ENCODE measurements at regions of chr14 and their contacts with region 1.

Region 1: GRCh38 chr14:55026793-55027561 is at the starts of genes SOCS4 and WDHD1:
- DNase-seq: peak; percentile 93 to 100 (median 96)
- ATAC-seq: peak; percentile 97
- H3K4me3 ChIP-seq: peak within 1 kb of the TSS; percentile 87
- H3K4me3 Mint-ChIP-seq: peak within 1 kb of the TSS; percentile 84 to 96 (median 93)
- H3K27ac ChIP-seq: peak within 1 kb of the TSS; percentile 86
- H3K27ac Mint-ChIP-seq: peak within 1 kb of the TSS; percentile 68 to 96 (median 92)
- H3K4me1 ChIP-seq: peaks cover 12 to 31% of the 10 kb centered on the region in 2 donors
- H3K4me1 Mint-ChIP-seq: peaks cover 26 to 59% (median 53%) of the 10 kb centered on the region in 7 donors
- H3K27me3 ChIP-seq: no peaks in the 10 kb centered on the region
- H3K27me3 Mint-ChIP-seq: no peaks in the 10 kb centered on the region
- total RNA-seq, gene SOCS4: 21.2 to 30.3 (median 22.1) TPM
- total RNA-seq, gene WDHD1: 2.6 to 26.6 (median 3.6) TPM

Region 2: DNA sequence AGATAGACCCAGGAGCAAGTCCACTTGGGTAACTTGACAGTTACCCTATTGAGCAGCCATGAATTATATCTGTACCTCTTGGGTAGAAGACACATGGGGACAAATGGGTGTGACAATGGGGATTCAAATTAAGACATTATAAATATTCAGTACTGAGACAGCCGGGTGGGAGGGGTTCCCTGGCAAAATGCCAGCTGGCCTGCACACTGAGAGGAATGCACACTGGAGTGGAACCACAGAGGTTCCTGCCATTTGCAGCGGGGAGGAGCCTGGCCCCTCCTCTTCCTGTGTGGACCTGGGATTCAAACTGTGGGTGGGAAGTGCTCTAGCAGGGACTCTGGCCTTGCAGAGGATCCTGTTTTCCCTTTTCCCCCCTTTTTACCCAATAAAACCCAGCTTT is 748.9 kb before region 1 on chr14:
- CTCF ChIA-PET with region 1: no interaction called
- POLR2A ChIA-PET with region 1: no interaction called
- intact Hi-C with region 1: no loop called
- DNase-seq: no peak
- ATAC-seq: no peak
- H3K4me3 ChIP-seq: no peak overlapping the region
- H3K4me3 Mint-ChIP-seq: no peak overlapping the region
- H3K27ac ChIP-seq: no peak overlapping the region
- H3K27ac Mint-ChIP-seq: no peak overlapping the region
- H3K4me1 ChIP-seq: no peaks in the 10 kb centered on the region
- H3K4me1 Mint-ChIP-seq: no peaks in the 10 kb centered on the region
- H3K27me3 ChIP-seq: no peaks in the 10 kb centered on the region
- H3K27me3 Mint-ChIP-seq: peaks cover 2 to 25% (median 14%) of the 10 kb centered on the region in 5 donors

Region 3: GRCh38 chr14:54440873-54441868 is 585.8 kb before region 1 on chr14 and contains the start of gene CNIH1:
- CTCF ChIA-PET with region 1: no interaction called
- POLR2A ChIA-PET with region 1: no interaction called
- intact Hi-C with region 1: loop called (anchors 1 to 2 kb)
- DNase-seq: peak; percentile 85 to 99 (median 93)
- ATAC-seq: peak; percentile 97
- H3K4me3 ChIP-seq: peak within 1 kb of the TSS; percentile 73
- H3K4me3 Mint-ChIP-seq: peak within 1 kb of the TSS; percentile 85 to 97 (median 94)
- H3K27ac ChIP-seq: peak within 1 kb of the TSS; percentile 80
- H3K27ac Mint-ChIP-seq: peak within 1 kb of the TSS; percentile 87 to 98 (median 95)
- H3K4me1 ChIP-seq: peaks cover 9 to 23% of the 10 kb centered on the region in 2 donors
- H3K4me1 Mint-ChIP-seq: peaks cover 23 to 54% (median 49%) of the 10 kb centered on the region in 7 donors
- H3K27me3 ChIP-seq: no peaks in the 10 kb centered on the region
- H3K27me3 Mint-ChIP-seq: peaks cover 0 to 2% (median 0%) of the 10 kb centered on the region in 5 donors
- total RNA-seq, gene CNIH1: 50.5 to 87.9 (median 57.8) TPM

Region 4: DNA sequence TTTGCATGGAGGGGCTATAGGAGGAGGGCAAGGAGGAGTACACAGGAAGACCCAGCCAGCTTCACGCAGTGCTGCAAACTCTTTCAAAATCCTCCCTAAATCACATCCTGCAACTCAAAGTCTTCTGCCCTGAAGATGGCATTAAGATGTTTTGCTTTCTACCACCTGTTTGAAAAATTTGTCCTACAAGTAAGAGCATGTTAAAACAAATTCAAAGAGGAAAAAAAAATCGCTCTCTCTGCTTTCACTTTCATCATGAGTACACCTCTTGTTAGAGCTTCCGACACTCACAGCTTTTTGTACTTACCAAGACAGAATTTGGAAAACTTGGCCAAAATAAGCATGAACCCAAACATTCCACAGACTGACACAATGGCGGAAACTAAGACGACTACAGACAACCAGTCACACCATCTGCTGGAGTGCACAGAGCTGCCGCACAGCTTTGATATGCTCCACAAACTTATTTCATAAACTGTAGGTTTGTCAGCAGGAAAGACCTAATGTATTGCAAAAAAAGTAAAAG is 145.7 kb before region 1 on chr14:
- CTCF ChIA-PET with region 1: interaction called, 3 read pairs
- POLR2A ChIA-PET with region 1: no interaction called
- intact Hi-C with region 1: loop called in 1 of 2 experiments (anchors 1 kb)
- DNase-seq: peak in 7 of 9 donors; percentile 55 to 74 (median 72)
- ATAC-seq: peak; percentile 77
- H3K4me3 ChIP-seq: peak overlapping the region; percentile 70
- H3K4me3 Mint-ChIP-seq: peak overlapping the region; percentile 85 to 97 (median 90)
- H3K27ac ChIP-seq: peak overlapping the region; percentile 79
- H3K27ac Mint-ChIP-seq: peak overlapping the region; percentile 90 to 99 (median 96)
- H3K4me1 ChIP-seq: peaks cover 7 to 17% of the 10 kb centered on the region in 2 donors
- H3K4me1 Mint-ChIP-seq: peaks cover 28 to 66% (median 60%) of the 10 kb centered on the region in 7 donors
- H3K27me3 ChIP-seq: no peaks in the 10 kb centered on the region
- H3K27me3 Mint-ChIP-seq: no peaks in the 10 kb centered on the region

Region 5: GRCh38 chr14:55038708-55039107 is 11.7 kb after region 1 on chr14:
- CTCF ChIA-PET with region 1: interaction called, 3 read pairs
- POLR2A ChIA-PET with region 1: no interaction called
- intact Hi-C with region 1: loop called in 1 of 2 experiments (anchors 1 kb)
- DNase-seq: no peak
- ATAC-seq: no peak
- H3K4me3 ChIP-seq: no peak overlapping the region
- H3K4me3 Mint-ChIP-seq: no peak overlapping the region
- H3K27ac ChIP-seq: no peak overlapping the region
- H3K27ac Mint-ChIP-seq: peak overlapping the region in 1 of 9 donors; percentile 15
- H3K4me1 ChIP-seq: no peaks in the 10 kb centered on the region
- H3K4me1 Mint-ChIP-seq: peaks cover 0 to 6% (median 2%) of the 10 kb centered on the region in 7 donors
- H3K27me3 ChIP-seq: no peaks in the 10 kb centered on the region
- H3K27me3 Mint-ChIP-seq: no peaks in the 10 kb centered on the region

Region 6: GRCh38 chr14:55065411-55065810 is 38.4 kb after region 1 on chr14:
- CTCF ChIA-PET with region 1: no interaction called
- POLR2A ChIA-PET with region 1: no interaction called
- intact Hi-C with region 1: no loop called
- DNase-seq: no peak
- ATAC-seq: no peak
- H3K4me3 ChIP-seq: no peak overlapping the region
- H3K4me3 Mint-ChIP-seq: no peak overlapping the region
- H3K27ac ChIP-seq: no peak overlapping the region
- H3K27ac Mint-ChIP-seq: peak overlapping the region in 4 of 9 donors; percentile 9 to 36 (median 18)
- H3K4me1 ChIP-seq: peaks cover 0 to 3% of the 10 kb centered on the region in 2 donors
- H3K4me1 Mint-ChIP-seq: peaks cover 7 to 25% (median 19%) of the 10 kb centered on the region in 7 donors
- H3K27me3 ChIP-seq: no peaks in the 10 kb centered on the region
- H3K27me3 Mint-ChIP-seq: no peaks in the 10 kb centered on the region

Region 7: DNA sequence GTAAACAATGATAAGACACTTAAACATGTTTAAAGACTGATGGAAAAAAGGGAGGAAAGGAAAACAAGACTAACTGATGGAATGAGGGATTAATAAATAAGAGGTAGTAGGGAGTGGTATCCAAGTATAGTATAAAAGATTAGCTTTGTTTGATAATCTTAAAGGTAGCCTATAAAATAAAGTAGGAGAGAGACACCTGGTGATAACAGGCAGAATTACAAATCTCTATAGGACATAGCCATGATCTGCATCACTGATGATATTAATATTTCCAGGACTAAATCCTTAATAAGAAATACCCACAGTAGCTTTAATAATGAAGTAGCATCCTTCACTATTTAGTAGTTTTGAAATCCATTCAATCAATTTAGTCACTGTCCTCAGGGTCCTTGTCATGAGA is 134.0 kb after region 1 on chr14:
- CTCF ChIA-PET with region 1: no interaction called
- POLR2A ChIA-PET with region 1: no interaction called
- intact Hi-C with region 1: loop called in 1 of 2 experiments (anchors 1 kb)
- DNase-seq: peak in 5 of 9 donors; percentile 6 to 37 (median 16)
- ATAC-seq: peak; percentile 68
- H3K4me3 ChIP-seq: no peak overlapping the region
- H3K4me3 Mint-ChIP-seq: no peak overlapping the region
- H3K27ac ChIP-seq: no peak overlapping the region
- H3K27ac Mint-ChIP-seq: peak overlapping the region in 1 of 9 donors; percentile 60
- H3K4me1 ChIP-seq: no peaks in the 10 kb centered on the region
- H3K4me1 Mint-ChIP-seq: peaks cover 0 to 20% (median 9%) of the 10 kb centered on the region in 7 donors
- H3K27me3 ChIP-seq: no peaks in the 10 kb centered on the region
- H3K27me3 Mint-ChIP-seq: peaks cover 0 to 4% (median 0%) of the 10 kb centered on the region in 5 donors

Region 8: GRCh38 chr14:55270832-55271565 is 244.0 kb after region 1 on chr14 and contains the start of gene FBXO34:
- CTCF ChIA-PET with region 1: no interaction called
- POLR2A ChIA-PET with region 1: no interaction called
- intact Hi-C with region 1: no loop called
- DNase-seq: peak; percentile 96 to 100 (median 99)
- ATAC-seq: peak; percentile 96
- H3K4me3 ChIP-seq: peak within 1 kb of the TSS; percentile 64
- H3K4me3 Mint-ChIP-seq: peak within 1 kb of the TSS; percentile 85 to 94 (median 92)
- H3K27ac ChIP-seq: peak within 1 kb of the TSS; percentile 88
- H3K27ac Mint-ChIP-seq: peak within 1 kb of the TSS; percentile 85 to 96 (median 94)
- H3K4me1 ChIP-seq: peaks cover 4 to 19% of the 10 kb centered on the region in 2 donors
- H3K4me1 Mint-ChIP-seq: peaks cover 19 to 48% (median 40%) of the 10 kb centered on the region in 7 donors
- H3K27me3 ChIP-seq: no peaks in the 10 kb centered on the region
- H3K27me3 Mint-ChIP-seq: peaks cover 0 to 3% (median 0%) of the 10 kb centered on the region in 5 donors
- total RNA-seq, gene FBXO34: 22.0 to 27.3 (median 25.8) TPM

Region 9: DNA sequence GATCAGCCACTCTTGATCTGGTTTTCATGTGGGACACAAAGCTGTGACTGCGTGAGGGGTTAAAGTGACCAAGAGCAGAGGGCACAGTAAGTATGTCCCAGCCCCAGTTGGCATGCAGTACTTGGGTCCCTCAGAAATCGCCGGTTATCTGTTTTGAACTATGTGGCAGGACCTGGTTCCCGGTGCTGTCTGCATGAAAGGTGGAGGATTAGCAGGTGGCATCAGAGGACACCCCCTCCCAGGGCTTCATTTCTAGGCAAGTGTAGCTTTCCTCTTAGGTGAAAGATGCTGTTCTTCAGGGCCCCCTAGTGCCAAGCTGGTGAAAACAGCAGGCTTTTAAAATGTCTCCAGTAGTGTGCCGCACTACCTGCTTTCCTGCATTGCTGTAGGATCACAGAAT is 327.5 kb after region 1 on chr14:
- CTCF ChIA-PET with region 1: no interaction called
- POLR2A ChIA-PET with region 1: no interaction called
- intact Hi-C with region 1: loop called in 1 of 2 experiments (anchors 10 kb)
- DNase-seq: peak; percentile 25 to 79 (median 73)
- ATAC-seq: peak; percentile 95
- H3K4me3 ChIP-seq: peak overlapping the region; percentile 12
- H3K4me3 Mint-ChIP-seq: peak overlapping the region in 9 of 10 donors; percentile 48 to 85 (median 72)
- H3K27ac ChIP-seq: peak overlapping the region; percentile 66
- H3K27ac Mint-ChIP-seq: peak overlapping the region; percentile 72 to 96 (median 95)
- H3K4me1 ChIP-seq: peaks cover 0 to 9% of the 10 kb centered on the region in 2 donors
- H3K4me1 Mint-ChIP-seq: peaks cover 6 to 29% (median 21%) of the 10 kb centered on the region in 7 donors
- H3K27me3 ChIP-seq: no peaks in the 10 kb centered on the region
- H3K27me3 Mint-ChIP-seq: no peaks in the 10 kb centered on the region